Right cardiac atrium (tissue), 5 donors: ENCODE measurements at regions of chrX and their contacts with region 1.

Region 1: DNA sequence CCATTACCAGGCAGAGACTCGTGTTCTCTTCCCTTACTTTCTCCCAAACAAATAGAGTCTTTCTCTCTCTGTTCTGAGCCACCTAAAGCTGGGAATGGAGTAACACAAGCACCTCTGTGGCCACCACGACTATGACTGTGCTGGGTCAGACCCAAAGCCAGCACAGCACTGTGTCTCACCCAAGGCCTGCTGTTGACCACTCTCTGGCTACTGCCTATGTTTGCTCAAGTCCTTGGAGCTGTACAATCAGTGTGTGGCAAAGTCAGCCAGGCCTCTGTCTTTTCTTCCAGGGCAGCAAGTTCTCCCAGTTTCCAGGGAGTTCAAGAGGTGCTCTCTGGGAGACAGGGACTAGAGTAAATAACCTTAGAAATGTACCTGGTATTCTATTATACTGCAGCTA is 239.4 kb downstream of the FAM47A start:
- DNase-seq: no peak
- ATAC-seq: no peak
- H3K4me3 ChIP-seq: no peak overlapping the region
- H3K27ac ChIP-seq: no peak overlapping the region
- H3K4me1 ChIP-seq: no peaks in the 10 kb centered on the region
- H3K27me3 ChIP-seq: no peaks in the 10 kb centered on the region

Region 2: DNA sequence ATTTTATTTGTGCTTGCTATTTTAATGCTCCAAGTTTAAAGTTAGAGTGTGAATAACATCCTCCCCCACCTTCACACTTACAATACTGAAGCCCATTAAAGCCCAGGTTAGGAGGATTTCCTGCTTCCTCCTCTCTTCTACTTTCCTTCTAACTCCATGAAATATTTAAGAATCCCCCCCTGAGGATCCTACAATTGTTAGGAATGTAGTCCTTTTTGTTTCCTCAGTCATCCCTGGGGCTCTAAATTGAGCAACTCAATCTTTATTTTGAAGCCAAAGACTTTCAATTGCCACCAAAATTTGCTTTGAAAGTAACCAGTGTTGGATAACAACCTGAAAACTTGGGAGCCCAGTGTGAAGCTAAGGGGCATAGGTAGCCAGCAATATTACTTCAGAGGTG is 37.4 kb before region 1 on chrX:
- intact Hi-C with region 1: loop called in 1 of 4 experiments (anchors 5 kb)
- DNase-seq: no peak
- ATAC-seq: no peak
- H3K4me3 ChIP-seq: no peak overlapping the region
- H3K27ac ChIP-seq: no peak overlapping the region
- H3K4me1 ChIP-seq: no peaks in the 10 kb centered on the region
- H3K27me3 ChIP-seq: no peaks in the 10 kb centered on the region

Region 3: GRCh38 chrX:34332334-34332733 is 439.7 kb after region 1 on chrX:
- intact Hi-C with region 1: no loop called
- DNase-seq: no peak
- ATAC-seq: no peak
- H3K4me3 ChIP-seq: no peak overlapping the region
- H3K27ac ChIP-seq: no peak overlapping the region
- H3K4me1 ChIP-seq: no peaks in the 10 kb centered on the region
- H3K27me3 ChIP-seq: no peaks in the 10 kb centered on the region